GM10248 (cell line): ENCODE measurements at regions of chr12 and their contacts with region 1.

Region 1: DNA sequence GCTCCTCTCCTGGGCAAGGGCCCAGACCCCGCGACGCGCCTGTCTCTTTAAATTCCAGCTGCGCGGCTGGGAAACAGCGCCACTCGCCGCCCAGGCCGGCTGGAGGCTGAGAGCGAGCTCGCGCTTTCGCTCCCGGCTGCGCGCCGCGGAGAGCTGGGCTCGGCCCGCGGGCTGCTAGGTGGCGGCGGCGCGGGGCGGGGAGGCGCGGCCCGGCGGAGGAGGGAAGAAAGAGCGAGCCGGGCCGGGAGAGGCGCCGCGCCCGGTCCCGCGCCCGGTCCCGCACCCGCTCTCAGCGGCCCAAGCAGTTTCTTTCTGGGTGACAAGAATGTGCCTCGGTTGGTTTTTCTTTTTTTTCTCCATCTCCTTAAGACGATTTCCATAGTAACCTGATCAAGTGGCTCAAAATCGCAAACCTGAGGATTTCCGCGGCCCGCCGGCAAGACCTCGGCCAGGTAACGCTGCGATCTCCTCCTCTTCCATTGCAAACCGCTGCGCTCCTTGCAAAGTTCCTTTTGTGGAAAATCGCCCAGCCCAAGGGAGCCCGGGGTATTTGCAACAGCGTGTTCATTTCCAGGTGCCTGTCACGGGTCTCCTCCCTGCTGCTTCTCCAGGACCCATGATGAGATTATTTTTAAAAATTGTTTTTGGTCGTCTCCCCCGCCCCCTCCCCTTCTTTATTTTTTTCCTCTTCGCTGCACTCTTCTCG is 259.5 kb upstream of the E2F7 start:
- DNase-seq: peak; percentile 78
- CTCF ChIP-seq: peak; percentile 50

Region 2: DNA sequence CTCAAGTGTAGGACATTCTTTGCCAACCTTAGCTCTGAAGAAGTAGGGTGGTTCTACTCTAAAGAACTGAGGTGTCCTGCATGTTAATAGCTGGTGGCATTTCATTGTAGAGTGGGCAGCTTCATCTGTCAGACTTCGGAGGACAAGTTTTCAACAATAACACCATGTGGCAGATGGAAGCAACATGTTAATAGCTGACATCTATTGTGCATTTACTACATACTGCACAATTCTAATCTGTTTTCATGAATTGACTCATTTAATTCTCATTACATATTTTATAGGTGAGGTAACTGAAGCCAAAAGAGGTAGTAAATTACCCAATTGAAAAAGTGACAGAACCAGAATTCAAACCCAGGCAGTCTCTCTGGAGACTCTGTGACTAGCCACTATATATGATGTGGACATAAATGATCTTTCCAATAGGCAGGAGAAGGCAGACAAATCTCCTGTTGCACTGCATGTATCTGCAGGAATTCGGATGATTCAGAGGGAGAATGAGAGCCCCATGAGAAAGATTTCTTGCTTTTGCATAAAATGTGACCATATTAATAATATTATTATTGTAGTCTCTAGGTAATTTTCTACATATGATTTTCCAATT is 122.4 kb before region 1 on chr12:
- CTCF ChIA-PET with region 1: no interaction called
- POLR2A ChIA-PET with region 1: no interaction called
- DNase-seq: no peak
- CTCF ChIP-seq: no peak

Region 3: GRCh38 chr12:77314378-77315052 is 10.4 kb before region 1 on chr12:
- CTCF ChIA-PET with region 1: interaction called, 13 read pairs
- POLR2A ChIA-PET with region 1: no interaction called
- DNase-seq: no peak
- CTCF ChIP-seq: no peak